H1 (cell line): ENCODE measurements at regions of chr16 and their contacts with region 1.

Region 1: GRCh38 chr16:85027349-85027957 is at the start of gene KIAA0513:
- DNase-seq: peak; percentile 73 to 97
- H3K4me3 ChIP-seq: peak within 1 kb of the TSS; percentile 70 to 92 (median 79)
- H3K27ac ChIP-seq: no peak within 1 kb of the TSS
- H3K4me1 ChIP-seq: peaks cover 3 to 7% (median 3%) of the 10 kb centered on the region in 4 experiments; a peak in 5 of 7 replicates
- H3K27me3 ChIP-seq: peaks cover 0 to 14% (median 7%) of the 10 kb centered on the region in 4 experiments; a peak in 4 of 7 replicates
- CTCF ChIP-seq: peak in 1 of 3 experiments; percentile 3; a peak in 1 of 4 replicates
- EP300 ChIP-seq: no peak
- POLR2A ChIP-seq: no peak; a peak in 1 of 3 replicates
- RAD21 ChIP-seq: no peak
- total RNA-seq, gene KIAA0513: 5.8 and 6.1 TPM in 2 replicates

Region 2: DNA sequence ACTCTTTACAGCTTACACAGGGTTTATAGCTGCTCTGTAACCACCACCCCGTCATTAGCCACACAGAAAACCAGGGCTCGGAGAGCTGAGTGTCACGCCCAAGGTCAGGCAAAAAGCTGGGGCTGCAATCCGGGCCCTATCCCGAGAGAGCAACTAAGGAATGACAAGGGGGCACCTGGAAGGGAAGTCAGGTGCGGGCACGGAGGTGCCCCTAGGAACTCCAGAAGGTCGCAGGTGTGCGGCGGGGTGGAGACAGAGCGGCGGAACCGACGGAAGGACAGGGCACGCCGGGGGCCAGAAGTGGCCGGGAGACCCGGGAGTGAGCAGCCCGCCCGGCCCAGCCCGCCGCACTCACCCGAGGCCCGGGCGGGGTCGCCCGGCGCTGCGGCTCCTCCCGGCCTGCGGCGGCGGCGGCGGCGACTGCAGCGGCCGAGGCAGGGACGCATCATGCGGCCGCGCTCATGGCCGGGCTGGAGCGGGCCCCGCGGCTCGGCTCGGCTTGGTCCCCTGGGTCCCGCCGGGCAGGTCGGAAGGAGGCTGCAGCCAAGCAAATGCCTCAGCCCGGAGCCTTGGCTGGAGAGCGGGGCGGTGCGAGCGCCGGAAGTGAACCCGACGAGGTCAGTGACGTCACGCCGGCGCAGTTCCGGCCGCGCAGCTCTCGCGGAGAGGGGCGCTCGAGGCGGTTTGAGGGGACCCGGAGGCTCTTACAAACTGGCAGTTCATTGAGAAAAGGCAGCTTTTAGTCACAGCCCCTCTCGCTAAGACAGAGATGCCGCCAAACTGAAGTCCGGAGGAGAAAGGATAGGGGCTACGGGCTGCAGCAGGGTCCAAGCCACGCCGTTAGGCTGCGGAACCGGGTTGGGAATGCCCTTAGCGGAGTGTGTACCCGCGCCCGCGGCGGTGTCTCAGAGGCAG is 16.3 kb before region 1 on chr16 and contains the start of gene ZDHHC7:
- CTCF ChIA-PET with region 1: interaction called, 8 read pairs
- POLR2A ChIA-PET with region 1: interaction called, 12 read pairs
- DNase-seq: peak; percentile 46 to 89
- H3K4me3 ChIP-seq: peak within 1 kb of the TSS; percentile 86 to 97 (median 93)
- H3K27ac ChIP-seq: peak within 1 kb of the TSS; percentile 86; the same call in 1 of the 2 replicates
- H3K4me1 ChIP-seq: peaks cover 0 to 4% (median 0%) of the 10 kb centered on the region in 4 experiments; a peak in 3 of 7 replicates
- H3K27me3 ChIP-seq: no peaks in the 10 kb centered on the region
- CTCF ChIP-seq: no peak
- EP300 ChIP-seq: no peak; a peak in 1 of 3 replicates
- POLR2A ChIP-seq: peak in 1 of 2 experiments; percentile 82; a peak in 2 of 3 replicates
- RAD21 ChIP-seq: no peak
- total RNA-seq, gene ZDHHC7: 40.5 and 43.5 TPM in 2 replicates

Region 3: DNA sequence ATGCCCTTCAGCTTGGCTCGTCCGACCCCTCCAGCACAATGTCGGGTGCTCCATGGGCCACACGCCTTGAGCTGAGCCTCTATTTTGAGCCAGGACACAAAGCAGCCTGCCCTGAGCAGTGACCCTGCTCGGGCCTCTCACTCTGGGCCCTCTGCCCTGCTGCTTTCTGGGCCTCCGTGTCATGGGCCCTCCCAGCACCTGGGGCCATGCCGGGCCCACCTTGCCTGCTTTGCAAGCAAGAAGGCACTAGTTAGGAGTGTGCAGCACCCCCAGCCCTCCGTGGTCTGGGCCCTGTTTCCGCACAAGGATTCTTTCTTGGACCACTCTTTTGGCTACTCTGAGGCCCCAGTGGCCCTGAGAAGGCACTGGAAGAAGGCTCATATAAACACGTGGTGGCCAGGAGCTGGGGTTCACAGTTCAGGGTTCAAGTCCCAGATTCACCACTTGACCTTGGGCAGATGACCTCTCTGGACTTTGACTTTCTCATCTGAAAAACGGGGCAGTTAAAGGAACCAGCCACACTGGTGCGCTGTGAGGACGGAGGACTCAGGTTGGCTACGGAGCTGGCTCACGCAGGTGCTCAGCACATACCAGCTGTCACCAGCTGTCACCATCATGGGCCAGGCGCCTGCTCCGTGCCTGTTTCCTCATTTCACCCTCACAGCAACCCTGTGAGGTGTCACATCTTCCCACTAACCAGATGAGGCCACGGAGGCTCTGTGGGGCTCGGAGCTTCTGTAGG is 419.7 kb after region 1 on chr16:
- CTCF ChIA-PET with region 1: no interaction called
- POLR2A ChIA-PET with region 1: no interaction called
- DNase-seq: no peak
- H3K4me3 ChIP-seq: no peak overlapping the region
- H3K27ac ChIP-seq: no peak overlapping the region
- H3K4me1 ChIP-seq: peaks cover 0 to 23% (median 16%) of the 10 kb centered on the region in 4 experiments; a peak in 6 of 7 replicates
- H3K27me3 ChIP-seq: no peaks in the 10 kb centered on the region; a peak in 1 of 7 replicates
- CTCF ChIP-seq: no peak
- EP300 ChIP-seq: no peak
- POLR2A ChIP-seq: no peak
- RAD21 ChIP-seq: no peak